ENCODE measurements at regions of chr7 and their contacts with region 1.

Region 1: GRCh38 chr7:974820-975681 is at the start of gene COX19:
- DNase-seq: peak; percentile 92
- ATAC-seq: peak; percentile 84
- H3K4me3 Mint-ChIP-seq: peak within 1 kb of the TSS; percentile 91
- H3K27ac Mint-ChIP-seq: peak within 1 kb of the TSS; percentile 86
- H3K4me1 Mint-ChIP-seq: peaks cover 33% of the 10 kb centered on the region
- H3K27me3 Mint-ChIP-seq: no peaks in the 10 kb centered on the region
- CTCF ChIP-seq: no peak
- total RNA-seq, gene COX19: 21.2 and 24.5 TPM in 2 replicates

Region 2: GRCh38 chr7:897771-898376 is 77.2 kb before region 1 on chr7:
- CTCF ChIA-PET with region 1: no interaction called
- POLR2A ChIA-PET with region 1: no interaction called
- intact Hi-C with region 1: no loop called
- DNase-seq: no peak
- ATAC-seq: no peak
- H3K4me3 Mint-ChIP-seq: no peak overlapping the region
- H3K27ac Mint-ChIP-seq: no peak overlapping the region
- H3K4me1 Mint-ChIP-seq: peaks cover 2% of the 10 kb centered on the region
- H3K27me3 Mint-ChIP-seq: no peaks in the 10 kb centered on the region
- CTCF ChIP-seq: no peak

Region 3: DNA sequence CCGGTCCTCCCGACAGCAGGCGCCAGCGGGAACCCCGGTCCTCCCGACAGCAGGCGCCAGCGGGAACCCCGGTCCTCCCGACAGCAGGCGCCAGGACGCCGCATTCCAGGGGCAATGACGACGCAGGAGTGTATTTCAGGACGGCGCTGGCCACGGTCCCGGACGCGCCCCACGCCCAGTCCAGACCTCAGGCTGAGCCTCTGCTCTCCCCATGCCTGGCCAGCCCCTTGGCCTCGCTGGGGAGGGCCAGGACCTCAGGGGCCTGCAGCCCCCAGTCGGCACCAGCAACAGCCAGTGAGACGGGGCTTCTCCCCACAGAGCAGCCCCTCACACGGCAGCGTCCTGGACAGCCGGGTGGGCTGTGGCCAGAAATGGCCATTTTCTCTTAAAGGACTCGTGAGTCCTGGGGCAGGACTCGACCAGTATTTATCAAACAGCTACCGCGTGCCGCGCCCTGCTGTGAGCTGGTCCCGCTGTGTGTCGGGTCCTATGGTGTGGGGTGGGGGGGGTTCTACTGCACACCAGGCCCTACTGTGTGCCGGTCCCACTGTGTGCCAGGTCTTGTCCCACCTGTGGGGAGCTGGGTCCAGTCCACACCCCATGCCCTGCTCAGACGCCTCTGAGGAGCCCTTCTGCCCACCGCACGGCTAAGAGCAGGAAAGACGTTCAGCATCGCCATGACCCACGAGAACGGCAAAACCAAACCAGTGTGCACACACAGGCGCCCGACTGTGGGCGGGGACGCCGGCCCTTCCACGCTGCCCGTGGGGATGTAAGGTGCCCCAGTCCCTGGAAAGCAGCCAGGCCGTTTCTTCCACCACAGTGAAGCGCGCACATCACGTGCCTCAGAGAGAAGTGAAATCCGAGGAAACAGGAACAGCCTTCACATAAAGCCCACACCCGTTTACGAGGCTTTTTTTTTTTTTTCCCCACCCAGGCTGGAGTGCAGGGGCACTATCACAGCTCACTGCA is 65.4 kb before region 1 on chr7:
- CTCF ChIA-PET with region 1: interaction called, 4 read pairs
- POLR2A ChIA-PET with region 1: interaction called, 17 read pairs
- intact Hi-C with region 1: loop called (anchors 1 kb)
- DNase-seq: peak; percentile 59
- ATAC-seq: peak; percentile 51
- H3K4me3 Mint-ChIP-seq: peak overlapping the region; percentile 74
- H3K27ac Mint-ChIP-seq: no peak overlapping the region
- H3K4me1 Mint-ChIP-seq: peaks cover 15% of the 10 kb centered on the region
- H3K27me3 Mint-ChIP-seq: peaks cover 2% of the 10 kb centered on the region
- CTCF ChIP-seq: no peak

Region 4: DNA sequence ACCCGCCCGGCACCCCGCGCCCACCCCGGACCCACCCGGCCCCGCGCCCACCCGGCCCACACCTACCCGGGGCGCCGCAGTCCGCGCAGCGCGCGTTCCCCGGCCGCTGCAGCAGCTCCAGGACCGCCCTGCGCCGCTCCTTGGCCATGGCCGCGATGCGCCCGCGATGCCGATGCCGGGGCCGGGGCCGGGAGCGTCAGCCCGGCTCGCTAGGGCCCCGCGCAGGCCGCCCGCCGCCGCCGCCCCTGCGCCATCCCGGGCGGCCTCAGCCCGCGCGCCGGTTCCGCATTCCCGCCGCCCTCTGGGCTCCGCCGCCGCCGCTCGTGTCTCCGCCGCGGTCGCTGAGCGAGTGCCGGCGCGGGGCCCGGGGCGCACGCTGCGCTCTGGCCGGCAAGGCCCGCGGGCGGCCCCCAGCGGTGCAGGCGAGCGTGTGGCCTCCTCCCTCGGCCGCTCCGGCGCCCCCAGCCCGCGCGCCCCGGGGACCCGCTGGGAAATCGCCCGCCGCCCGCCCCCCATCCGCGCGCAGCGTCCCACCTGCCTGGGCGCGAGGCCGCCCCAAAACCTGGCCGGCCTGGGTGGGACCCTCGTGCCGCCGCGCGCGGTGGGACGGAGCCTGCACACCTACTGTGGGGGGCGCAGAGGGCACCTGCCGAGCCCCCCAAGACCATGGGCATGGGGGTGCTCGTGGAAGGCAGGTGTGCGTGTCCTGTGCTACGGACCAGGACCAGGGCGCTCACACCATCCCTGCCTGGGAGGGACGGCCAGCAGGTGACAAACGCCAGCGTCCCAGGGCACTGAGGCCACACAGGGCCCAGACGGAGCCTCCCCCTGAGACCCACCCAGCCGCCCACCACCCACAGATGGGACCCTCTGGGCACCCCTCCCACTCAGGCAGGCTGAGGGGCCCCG is 20.5 kb before region 1 on chr7 and contains the start of gene ADAP1:
- CTCF ChIA-PET with region 1: interaction called, 3 read pairs
- POLR2A ChIA-PET with region 1: interaction called, 8 read pairs
- intact Hi-C with region 1: loop called (anchors 2 kb)
- DNase-seq: peak; percentile 57
- ATAC-seq: peak; percentile 73
- H3K4me3 Mint-ChIP-seq: peak within 1 kb of the TSS; percentile 70
- H3K27ac Mint-ChIP-seq: no peak within 1 kb of the TSS
- H3K4me1 Mint-ChIP-seq: peaks cover 18% of the 10 kb centered on the region
- H3K27me3 Mint-ChIP-seq: peaks cover 10% of the 10 kb centered on the region
- CTCF ChIP-seq: no peak
- total RNA-seq, gene ADAP1: 9.4 and 11.9 TPM in 2 replicates

Region 5: GRCh38 chr7:1028031-1028770 is 53.1 kb after region 1 on chr7:
- CTCF ChIA-PET with region 1: no interaction called
- POLR2A ChIA-PET with region 1: interaction called, 10 read pairs
- intact Hi-C with region 1: loop called (anchors 1 kb)
- DNase-seq: peak; percentile 85
- ATAC-seq: peak; percentile 38
- H3K4me3 Mint-ChIP-seq: peak overlapping the region; percentile 91
- H3K27ac Mint-ChIP-seq: no peak overlapping the region
- H3K4me1 Mint-ChIP-seq: peaks cover 61% of the 10 kb centered on the region
- H3K27me3 Mint-ChIP-seq: no peaks in the 10 kb centered on the region
- CTCF ChIP-seq: no peak

Region 6: DNA sequence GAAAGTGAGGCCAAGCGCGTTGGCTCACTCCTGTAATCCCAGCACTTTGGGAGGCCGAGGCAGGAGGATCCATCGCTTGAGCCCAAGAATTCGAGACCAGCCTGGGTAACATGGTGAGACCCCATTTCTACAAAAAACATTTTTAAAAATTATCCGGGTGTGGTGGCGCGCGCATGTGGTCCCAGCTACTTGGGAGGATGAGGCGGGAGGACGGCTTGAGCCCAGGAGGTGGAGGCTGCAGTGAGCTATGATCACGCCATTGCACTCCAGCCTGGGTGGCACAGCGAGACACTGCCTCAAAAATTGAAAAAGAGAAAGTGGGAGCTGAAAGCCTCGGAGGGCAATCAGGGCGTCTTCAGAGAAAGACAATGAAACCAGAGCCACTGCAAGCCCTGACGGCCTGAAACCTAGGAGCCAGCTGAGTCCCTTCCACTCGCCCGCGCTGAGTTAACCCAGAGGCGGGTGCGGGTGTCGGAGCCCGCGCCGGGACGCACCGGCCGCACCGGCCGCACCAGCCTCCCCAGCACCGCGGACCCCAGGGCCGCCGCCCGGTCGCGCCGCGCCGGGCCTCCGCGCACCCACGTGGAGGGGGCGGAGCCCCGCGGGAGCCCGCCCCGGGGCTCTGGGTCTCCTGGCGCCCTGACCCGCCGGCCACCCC is 162.6 kb after region 1 on chr7:
- CTCF ChIA-PET with region 1: no interaction called
- POLR2A ChIA-PET with region 1: interaction called, 14 read pairs
- intact Hi-C with region 1: loop called (anchors 1 kb)
- DNase-seq: no peak
- ATAC-seq: peak; percentile 62
- H3K4me3 Mint-ChIP-seq: peak overlapping the region; percentile 86
- H3K27ac Mint-ChIP-seq: peak overlapping the region; percentile 70
- H3K4me1 Mint-ChIP-seq: peaks cover 52% of the 10 kb centered on the region
- H3K27me3 Mint-ChIP-seq: no peaks in the 10 kb centered on the region
- CTCF ChIP-seq: no peak